HepG2 (cell line): ENCODE measurements at regions of chr21 and their contacts with region 1.

Region 1: DNA sequence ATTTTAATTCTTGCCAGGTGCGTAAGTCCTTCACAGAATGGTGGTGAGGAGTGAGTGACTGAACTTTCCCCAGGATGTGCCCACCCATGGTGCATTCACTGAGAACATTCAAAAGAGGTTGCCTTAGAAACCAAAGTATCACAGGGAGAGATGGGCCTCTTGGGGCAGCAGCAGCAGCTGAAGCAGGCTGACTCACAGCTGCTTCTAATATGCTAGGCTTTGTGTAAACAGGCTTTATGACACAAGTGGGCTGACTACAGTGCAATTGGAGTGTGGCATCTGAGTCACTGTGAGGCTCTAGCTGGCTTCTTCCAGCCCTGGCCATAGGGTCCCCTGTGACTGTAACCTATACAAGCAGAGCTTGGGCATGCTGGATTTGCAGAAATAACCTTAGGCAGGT is 12.6 kb downstream of the PIGP start:
- DNase-seq: peak; percentile 89
- ATAC-seq: peak; percentile 98
- H3K4me3 ChIP-seq: no peak overlapping the region
- H3K27ac ChIP-seq: no peak overlapping the region
- H3K4me1 ChIP-seq: peaks cover 33% of the 10 kb centered on the region
- H3K27me3 ChIP-seq: no peaks in the 10 kb centered on the region
- CTCF ChIP-seq: peak; percentile 29; the same call in 1 of the 2 replicates
- EP300 ChIP-seq: peak in 1 of 2 experiments; percentile 37; a peak in 2 of 4 replicates
- POLR2A ChIP-seq: no peak
- RAD21 ChIP-seq: peak; percentile 40; the same call in 1 of the 2 replicates

Region 2: GRCh38 chr21:35503671-35504070 is 1556.6 kb before region 1 on chr21:
- CTCF ChIA-PET with region 1: no interaction called
- POLR2A ChIA-PET with region 1: no interaction called
- in situ Hi-C with region 1: no loop called
- intact Hi-C with region 1: no loop called
- DNase-seq: no peak
- ATAC-seq: no peak
- H3K4me3 ChIP-seq: no peak overlapping the region
- H3K27ac ChIP-seq: no peak overlapping the region
- H3K4me1 ChIP-seq: peaks cover 6% of the 10 kb centered on the region; the same call in 1 of the 2 replicates
- H3K27me3 ChIP-seq: no peaks in the 10 kb centered on the region
- CTCF ChIP-seq: no peak
- EP300 ChIP-seq: no peak
- POLR2A ChIP-seq: no peak
- RAD21 ChIP-seq: no peak

Region 3: DNA sequence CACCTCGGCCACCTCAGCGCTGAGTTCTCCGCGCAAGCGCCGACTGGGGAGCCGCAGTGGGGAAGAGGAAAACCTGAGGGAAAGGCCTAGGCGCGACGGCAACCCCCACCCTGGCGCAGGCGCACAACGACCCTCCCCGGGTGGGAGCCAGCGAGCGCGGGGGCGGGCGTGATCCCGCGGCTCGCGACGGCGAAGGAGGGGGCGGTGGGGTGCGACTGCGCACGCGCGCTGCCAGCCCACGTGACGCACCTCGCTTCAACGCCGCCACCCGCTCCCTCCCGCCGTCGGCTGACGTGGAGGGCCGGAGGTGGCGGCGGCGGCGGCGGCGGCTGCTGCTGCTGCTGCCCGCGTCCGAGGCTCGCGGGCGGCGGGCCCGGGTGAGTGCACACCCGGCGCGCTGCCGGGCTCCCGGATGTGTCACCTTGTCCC is 12.7 kb after region 1 on chr21 and contains the starts of genes PIGP and TTC3:
- CTCF ChIA-PET with region 1: no interaction called
- POLR2A ChIA-PET with region 1: interaction called, 10 read pairs
- in situ Hi-C with region 1: no loop called
- intact Hi-C with region 1: no loop called
- DNase-seq: peak; percentile 87
- ATAC-seq: peak; percentile 83
- H3K4me3 ChIP-seq: peak within 1 kb of the TSS; percentile 81 to 92 (median 84)
- H3K27ac ChIP-seq: peak within 1 kb of the TSS; percentile 96
- H3K4me1 ChIP-seq: peaks cover 52% of the 10 kb centered on the region
- H3K27me3 ChIP-seq: no peaks in the 10 kb centered on the region; a peak in 1 of 5 replicates
- CTCF ChIP-seq: no peak
- EP300 ChIP-seq: no peak
- POLR2A ChIP-seq: peak; percentile 77 to 79
- RAD21 ChIP-seq: no peak
- total RNA-seq, gene PIGP: 13.7 and 14.8 TPM in 2 replicates
- total RNA-seq, gene TTC3: 108 and 162 TPM in 2 replicates

Region 4: GRCh38 chr21:37220433-37220980 is 160.2 kb after region 1 on chr21:
- CTCF ChIA-PET with region 1: no interaction called
- POLR2A ChIA-PET with region 1: no interaction called
- in situ Hi-C with region 1: no loop called
- intact Hi-C with region 1: no loop called
- DNase-seq: peak; percentile 48
- ATAC-seq: peak; percentile 86
- H3K4me3 ChIP-seq: peak overlapping the region; percentile 66 to 78 (median 67)
- H3K27ac ChIP-seq: peak overlapping the region; percentile 74
- H3K4me1 ChIP-seq: peaks cover 21% of the 10 kb centered on the region
- H3K27me3 ChIP-seq: no peaks in the 10 kb centered on the region
- CTCF ChIP-seq: no peak; the same call in 1 of the 2 replicates
- EP300 ChIP-seq: no peak
- POLR2A ChIP-seq: no peak; a peak in 1 of 4 replicates
- RAD21 ChIP-seq: no peak